Psoas muscle (tissue), 8 donors: ENCODE measurements at regions of chr4 and their contacts with region 1.

Region 1: GRCh38 chr4:185096032-185096653 is 46.9 kb upstream of the SLC25A4 start:
- DNase-seq: no peak
- ATAC-seq: peak in 3 of 4 donors; percentile 60 to 75 (median 69)
- H3K4me3 ChIP-seq: no peak overlapping the region
- H3K27ac ChIP-seq: no peak overlapping the region
- H3K4me1 ChIP-seq: no peaks in the 10 kb centered on the region
- H3K27me3 ChIP-seq: no peaks in the 10 kb centered on the region
- CTCF ChIP-seq: peak; percentile 65

Region 2: GRCh38 chr4:185005216-185005819 is 90.8 kb before region 1 on chr4:
- intact Hi-C with region 1: loop called in 1 of 2 experiments (anchors 2 kb)
- DNase-seq: peak; percentile 80 to 90
- ATAC-seq: peak; percentile 93 to 99 (median 96)
- H3K4me3 ChIP-seq: peak overlapping the region; percentile 53
- H3K27ac ChIP-seq: no peak overlapping the region
- H3K4me1 ChIP-seq: no peaks in the 10 kb centered on the region
- H3K27me3 ChIP-seq: peaks cover 0 to 16% (median 3%) of the 10 kb centered on the region in 3 donors
- CTCF ChIP-seq: peak; percentile 95

Region 3: GRCh38 chr4:185039508-185040273 is 56.5 kb before region 1 on chr4:
- intact Hi-C with region 1: loop called (anchors 2 to 5 kb)
- DNase-seq: no peak
- ATAC-seq: peak; percentile 77 to 96 (median 90)
- H3K4me3 ChIP-seq: peak overlapping the region; percentile 42
- H3K27ac ChIP-seq: no peak overlapping the region
- H3K4me1 ChIP-seq: no peaks in the 10 kb centered on the region
- H3K27me3 ChIP-seq: no peaks in the 10 kb centered on the region
- CTCF ChIP-seq: peak; percentile 80